CD8-positive, alpha-beta T cell (primary cell): ENCODE measurements at regions of chr15 and their contacts with region 1.

Region 1: DNA sequence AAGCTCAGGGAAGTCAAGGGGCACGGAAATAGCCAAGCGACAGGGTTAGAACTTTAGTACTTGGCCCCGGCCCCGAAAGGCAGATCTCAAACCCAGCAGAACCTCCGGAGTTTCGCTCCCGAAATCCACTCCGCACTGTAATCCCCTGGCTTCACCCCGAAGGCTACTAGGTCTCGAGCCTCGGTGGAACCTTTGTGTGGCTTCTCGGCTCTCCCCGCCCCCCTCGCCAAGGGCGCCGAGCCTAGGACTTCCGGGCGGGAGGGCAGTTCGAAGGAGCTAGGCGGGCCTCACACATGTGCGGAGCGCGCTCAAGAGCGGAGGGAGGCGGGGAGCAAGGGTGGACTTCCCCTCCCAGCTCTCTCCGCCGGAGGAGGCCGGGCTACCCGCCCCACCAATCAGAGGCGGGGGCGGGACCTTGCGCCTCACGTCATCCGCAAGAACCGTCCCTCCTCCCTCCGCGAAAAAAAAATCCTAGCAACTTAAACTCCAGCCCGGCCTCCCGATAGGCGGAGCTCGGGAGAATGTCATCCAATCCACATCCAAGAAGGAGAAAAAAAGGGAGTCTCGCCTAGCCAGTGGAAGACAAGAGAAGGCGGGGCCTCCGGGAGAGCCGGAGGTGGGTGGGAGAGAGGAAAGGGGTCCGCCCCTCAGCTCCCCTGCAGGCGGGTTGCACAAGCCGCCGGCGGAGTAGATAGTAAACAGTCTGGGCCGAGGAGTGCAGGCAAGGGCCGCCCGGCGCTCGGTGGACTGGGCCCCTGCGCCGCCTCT is 2.4 kb upstream of the SIN3A start:
- DNase-seq: peak; percentile 93 to 100 (median 95)
- ATAC-seq: peak; percentile 39
- H3K4me3 ChIP-seq: peak overlapping the region; percentile 86 to 96
- H3K4me3 Mint-ChIP-seq: peak overlapping the region; percentile 92
- H3K27ac ChIP-seq: peak overlapping the region; percentile 83 to 92
- H3K27ac Mint-ChIP-seq: peak overlapping the region; percentile 99
- H3K4me1 ChIP-seq: peaks cover 23% of the 10 kb centered on the region
- H3K4me1 Mint-ChIP-seq: peaks cover 37% of the 10 kb centered on the region
- H3K27me3 ChIP-seq: no peaks in the 10 kb centered on the region
- H3K27me3 Mint-ChIP-seq: no peaks in the 10 kb centered on the region
- CTCF ChIP-seq: no peak

Region 2: DNA sequence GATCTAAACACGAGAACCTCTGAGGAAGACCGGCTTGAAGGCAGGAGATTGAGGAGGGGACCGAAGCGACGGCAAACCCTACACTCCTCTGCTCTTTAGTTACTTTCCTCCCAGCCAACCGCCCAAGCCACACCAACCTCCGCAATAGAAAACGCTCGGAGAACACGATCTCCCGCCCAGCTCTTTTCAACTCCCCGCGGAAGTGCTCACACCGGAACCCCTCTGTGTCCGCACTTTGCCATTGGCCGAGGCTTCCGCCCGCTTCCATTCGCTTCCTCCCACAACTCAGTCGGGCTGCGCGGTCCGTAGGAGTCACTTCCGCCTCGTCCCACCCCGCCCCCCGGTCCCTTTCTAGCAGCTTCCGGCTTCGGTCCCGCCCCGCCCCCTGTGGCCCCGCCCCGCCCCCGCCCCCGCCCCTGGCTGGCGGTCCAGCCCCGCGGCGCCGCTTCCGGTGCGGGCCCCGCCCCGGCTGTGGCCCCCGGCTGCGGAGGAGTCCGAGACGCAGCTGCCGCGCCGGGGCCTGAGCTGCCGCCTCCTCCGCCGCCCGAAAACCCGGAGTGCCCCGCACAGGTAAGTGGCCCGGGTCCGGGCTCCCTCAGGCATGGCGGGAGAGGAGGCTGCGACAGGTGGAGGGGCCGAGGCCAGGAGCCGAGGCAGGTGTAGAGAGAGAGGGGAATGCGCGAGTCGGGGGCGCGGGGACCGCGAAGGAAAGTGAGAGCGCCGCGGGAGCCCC is 913.0 kb before region 1 on chr15 and contains the start of gene ARID3B:
- CTCF ChIA-PET with region 1: no interaction called
- POLR2A ChIA-PET with region 1: interaction called, 3 read pairs
- intact Hi-C with region 1: loop called (anchors 5 kb)
- DNase-seq: peak; percentile 89 to 98 (median 95)
- ATAC-seq: peak; percentile 82
- H3K4me3 ChIP-seq: peak within 1 kb of the TSS; percentile 88
- H3K4me3 Mint-ChIP-seq: peak within 1 kb of the TSS; percentile 99
- H3K27ac ChIP-seq: peak within 1 kb of the TSS; percentile 66 to 81
- H3K27ac Mint-ChIP-seq: peak within 1 kb of the TSS; percentile 98
- H3K4me1 ChIP-seq: peaks cover 39% of the 10 kb centered on the region
- H3K4me1 Mint-ChIP-seq: peaks cover 55% of the 10 kb centered on the region
- H3K27me3 ChIP-seq: no peaks in the 10 kb centered on the region
- H3K27me3 Mint-ChIP-seq: no peaks in the 10 kb centered on the region
- CTCF ChIP-seq: no peak
- total RNA-seq, gene ARID3B: 35.2 to 38.7 TPM

Region 3: GRCh38 chr15:74937596-74938296 is 516.1 kb before region 1 on chr15 and contains the start of gene COX5A:
- CTCF ChIA-PET with region 1: no interaction called
- POLR2A ChIA-PET with region 1: interaction called, 3 read pairs
- intact Hi-C with region 1: loop called in 1 of 2 experiments (anchors 2 kb)
- DNase-seq: peak; percentile 83 to 97 (median 88)
- ATAC-seq: peak; percentile 96
- H3K4me3 ChIP-seq: peak within 1 kb of the TSS; percentile 73 to 86
- H3K4me3 Mint-ChIP-seq: peak within 1 kb of the TSS; percentile 88
- H3K27ac ChIP-seq: peak within 1 kb of the TSS; percentile 72 to 73
- H3K27ac Mint-ChIP-seq: peak within 1 kb of the TSS; percentile 92
- H3K4me1 ChIP-seq: peaks cover 14% of the 10 kb centered on the region
- H3K4me1 Mint-ChIP-seq: peaks cover 31% of the 10 kb centered on the region
- H3K27me3 ChIP-seq: no peaks in the 10 kb centered on the region
- H3K27me3 Mint-ChIP-seq: no peaks in the 10 kb centered on the region
- CTCF ChIP-seq: no peak
- total RNA-seq, gene COX5A: 40.0 to 42.6 TPM

Region 4: DNA sequence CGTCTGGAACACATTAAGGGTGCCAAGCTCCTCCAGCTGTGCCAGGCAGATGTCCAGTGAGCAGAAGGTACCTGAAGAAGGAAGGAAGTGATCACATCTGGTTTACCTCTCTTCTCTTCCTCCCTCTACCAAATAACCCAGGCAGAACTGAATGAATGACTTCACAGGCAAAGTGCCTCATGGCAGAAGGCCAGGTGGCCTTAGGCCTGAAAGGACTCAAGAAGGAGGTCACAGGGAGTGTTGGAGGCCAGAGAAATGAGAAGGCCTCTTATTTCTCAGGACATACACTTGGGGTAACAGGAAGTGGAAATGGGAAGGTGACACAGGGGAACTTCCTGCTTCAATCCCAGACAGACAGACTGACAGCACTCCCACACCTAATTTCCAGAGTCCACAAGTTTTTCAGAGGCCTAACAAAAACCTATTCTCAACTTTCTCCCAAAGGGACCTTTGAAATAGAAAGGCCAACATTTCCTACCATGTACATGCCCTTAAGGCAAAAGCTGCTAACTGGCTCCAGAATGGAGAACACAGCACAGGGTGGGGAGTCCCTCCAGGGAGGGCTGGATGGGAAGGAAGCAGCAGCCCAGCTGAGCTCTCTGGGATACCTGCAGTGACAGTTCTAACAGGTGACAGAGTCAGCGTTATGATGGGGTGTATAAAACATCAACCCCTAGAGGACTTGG is 15.2 kb after region 1 on chr15:
- CTCF ChIA-PET with region 1: no interaction called
- POLR2A ChIA-PET with region 1: interaction called, 23 read pairs
- intact Hi-C with region 1: no loop called
- DNase-seq: no peak
- ATAC-seq: no peak
- H3K4me3 ChIP-seq: no peak overlapping the region
- H3K4me3 Mint-ChIP-seq: no peak overlapping the region
- H3K27ac ChIP-seq: no peak overlapping the region
- H3K27ac Mint-ChIP-seq: no peak overlapping the region
- H3K4me1 ChIP-seq: no peaks in the 10 kb centered on the region
- H3K4me1 Mint-ChIP-seq: no peaks in the 10 kb centered on the region
- H3K27me3 ChIP-seq: no peaks in the 10 kb centered on the region
- H3K27me3 Mint-ChIP-seq: no peaks in the 10 kb centered on the region
- CTCF ChIP-seq: no peak

Region 5: GRCh38 chr15:75647370-75648155 is 193.7 kb after region 1 on chr15 and contains the start of gene SNX33:
- CTCF ChIA-PET with region 1: interaction called, 4 read pairs
- POLR2A ChIA-PET with region 1: interaction called, 13 read pairs
- intact Hi-C with region 1: no loop called
- DNase-seq: peak in 8 of 9 experiments; percentile 12 to 68 (median 54)
- ATAC-seq: peak; percentile 68
- H3K4me3 ChIP-seq: peak within 1 kb of the TSS; percentile 79 to 89
- H3K4me3 Mint-ChIP-seq: peak within 1 kb of the TSS; percentile 82
- H3K27ac ChIP-seq: peak within 1 kb of the TSS; percentile 31 to 51
- H3K27ac Mint-ChIP-seq: peak within 1 kb of the TSS; percentile 57
- H3K4me1 ChIP-seq: peaks cover 20% of the 10 kb centered on the region
- H3K4me1 Mint-ChIP-seq: peaks cover 26% of the 10 kb centered on the region
- H3K27me3 ChIP-seq: no peaks in the 10 kb centered on the region
- H3K27me3 Mint-ChIP-seq: no peaks in the 10 kb centered on the region
- CTCF ChIP-seq: no peak
- total RNA-seq, gene SNX33: 0.56 to 0.95 TPM

Region 6: DNA sequence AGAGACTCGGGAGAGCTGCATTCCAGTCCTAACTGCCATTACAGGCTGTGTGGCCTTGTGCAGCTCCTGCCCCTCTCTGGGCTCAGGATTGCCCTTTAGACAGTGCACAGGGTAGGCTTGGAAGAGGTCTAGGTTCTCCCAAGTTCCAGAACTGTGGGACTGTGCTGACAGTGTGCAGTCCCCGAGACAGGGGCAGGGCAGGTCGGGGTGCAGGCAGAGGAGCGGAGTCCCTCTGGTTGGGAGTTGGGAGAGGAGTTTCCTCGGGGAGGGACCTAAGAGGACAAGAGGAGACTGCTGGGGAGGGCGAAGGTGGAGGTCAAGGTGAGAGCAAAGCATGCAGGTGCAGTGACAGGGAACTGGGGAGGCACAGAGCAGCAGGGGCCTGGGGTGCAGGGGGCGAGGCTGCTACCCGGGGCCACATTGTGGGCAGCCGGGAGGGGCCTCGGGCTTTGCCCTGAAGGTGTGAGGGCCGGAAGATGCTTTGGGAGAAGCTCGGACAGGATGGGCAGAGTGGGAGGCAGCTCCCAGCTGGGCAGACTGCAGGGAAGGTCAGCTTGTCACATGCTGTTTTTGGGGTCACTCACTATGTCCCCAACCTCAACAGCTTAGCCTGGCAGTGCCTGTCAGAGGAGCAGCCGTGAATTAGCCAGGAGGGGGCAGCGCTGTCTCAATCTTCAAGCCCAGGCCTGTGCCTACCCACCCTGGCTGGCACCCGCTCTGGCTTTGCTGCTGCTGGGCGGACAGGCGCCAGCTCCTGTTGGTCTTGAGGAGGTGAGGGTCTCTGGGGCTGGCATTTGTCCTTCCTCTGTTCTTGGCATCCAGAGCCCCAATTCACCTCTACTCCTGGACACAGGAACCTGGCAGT is 274.2 kb after region 1 on chr15:
- CTCF ChIA-PET with region 1: no interaction called
- POLR2A ChIA-PET with region 1: no interaction called
- intact Hi-C with region 1: no loop called
- DNase-seq: peak; percentile 56 to 83 (median 76)
- ATAC-seq: peak; percentile 83
- H3K4me3 ChIP-seq: no peak overlapping the region
- H3K4me3 Mint-ChIP-seq: no peak overlapping the region
- H3K27ac ChIP-seq: no peak overlapping the region
- H3K27ac Mint-ChIP-seq: no peak overlapping the region
- H3K4me1 ChIP-seq: peaks cover 3% of the 10 kb centered on the region
- H3K4me1 Mint-ChIP-seq: peaks cover 13% of the 10 kb centered on the region
- H3K27me3 ChIP-seq: no peaks in the 10 kb centered on the region
- H3K27me3 Mint-ChIP-seq: peaks cover 7% of the 10 kb centered on the region
- CTCF ChIP-seq: peak; percentile 62

Region 7: GRCh38 chr15:77419836-77420609 is 1966.1 kb after region 1 on chr15 and contains the start of gene PEAK1:
- CTCF ChIA-PET with region 1: no interaction called
- POLR2A ChIA-PET with region 1: no interaction called
- intact Hi-C with region 1: loop called in 1 of 2 experiments (anchors 5 kb)
- DNase-seq: peak; percentile 99 to 100 (median 100)
- ATAC-seq: peak; percentile 99
- H3K4me3 ChIP-seq: peak within 1 kb of the TSS; percentile 74 to 75
- H3K4me3 Mint-ChIP-seq: peak within 1 kb of the TSS; percentile 97
- H3K27ac ChIP-seq: peak within 1 kb of the TSS; percentile 61 to 93
- H3K27ac Mint-ChIP-seq: peak within 1 kb of the TSS; percentile 97
- H3K4me1 ChIP-seq: peaks cover 17% of the 10 kb centered on the region
- H3K4me1 Mint-ChIP-seq: peaks cover 49% of the 10 kb centered on the region
- H3K27me3 ChIP-seq: no peaks in the 10 kb centered on the region
- H3K27me3 Mint-ChIP-seq: no peaks in the 10 kb centered on the region
- CTCF ChIP-seq: no peak
- total RNA-seq, gene PEAK1: 12.4 to 15.7 TPM